Ovary (tissue), 10 donors: ENCODE measurements at regions of chr9 and their contacts with region 1.

Region 1: DNA sequence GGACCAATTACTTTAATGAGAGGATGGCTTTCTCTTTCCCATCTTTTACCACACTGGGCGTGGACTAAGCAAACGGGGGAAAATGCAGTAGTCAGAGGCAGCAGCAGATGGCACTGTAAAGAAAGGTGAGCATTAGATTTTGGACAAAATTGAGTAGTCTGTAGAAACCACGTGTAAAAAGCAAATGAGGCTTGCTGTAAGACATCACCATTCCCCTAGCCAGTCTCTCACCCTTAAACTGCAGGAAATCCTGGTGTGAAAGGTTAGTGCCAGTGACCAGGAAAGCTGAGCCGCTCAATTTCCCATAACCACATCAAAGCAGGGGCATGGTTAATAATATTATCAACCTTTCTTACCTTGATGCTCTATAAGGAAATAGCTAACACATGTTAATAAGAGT is 31.8 kb downstream of the SPATA31C2 start:
- DNase-seq: peak in 2 of 5 donors; percentile 24 to 28
- H3K4me3 ChIP-seq: no peak overlapping the region
- H3K27ac ChIP-seq: no peak overlapping the region
- H3K4me1 ChIP-seq: no peaks in the 10 kb centered on the region
- H3K27me3 ChIP-seq: no peaks in the 10 kb centered on the region
- CTCF ChIP-seq: peak in 1 of 3 donors; percentile 25
- EP300 ChIP-seq: no peak
- POLR2A ChIP-seq: no peak

Region 2: DNA sequence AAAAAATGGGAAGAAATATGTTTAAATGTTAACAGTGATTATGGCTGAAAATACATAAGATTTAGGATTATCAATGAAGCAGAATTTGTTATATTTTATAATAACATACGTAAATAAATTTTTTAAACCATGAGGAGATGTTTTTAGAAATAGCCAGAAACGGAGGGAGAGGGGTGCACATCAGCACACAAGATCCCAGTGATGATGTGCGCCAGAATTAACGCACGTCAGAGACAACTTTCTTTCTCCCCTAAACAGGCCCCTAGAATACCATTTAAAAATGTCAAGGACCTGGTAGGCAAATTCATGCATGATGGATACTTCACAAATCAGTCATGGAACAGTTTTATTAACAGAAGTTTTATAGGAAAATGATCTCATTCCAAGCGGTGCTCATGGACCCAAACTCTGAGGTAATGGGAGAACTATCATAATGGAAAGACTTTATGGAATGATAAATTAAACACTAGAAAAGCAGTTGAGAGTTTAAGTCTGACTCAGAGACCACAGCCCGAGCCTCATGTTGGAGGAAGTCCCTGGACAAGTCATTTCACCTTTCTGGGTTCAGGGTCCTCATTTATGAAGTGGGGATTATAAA is 900.3 kb before region 1 on chr9:
- intact Hi-C with region 1: no loop called
- DNase-seq: no peak
- H3K4me3 ChIP-seq: no peak overlapping the region
- H3K27ac ChIP-seq: no peak overlapping the region
- H3K4me1 ChIP-seq: no peaks in the 10 kb centered on the region
- H3K27me3 ChIP-seq: no peaks in the 10 kb centered on the region
- CTCF ChIP-seq: no peak
- EP300 ChIP-seq: no peak
- POLR2A ChIP-seq: no peak

Region 3: GRCh38 chr9:87973730-87974292 is 132.7 kb before region 1 on chr9:
- intact Hi-C with region 1: no loop called
- DNase-seq: peak in 1 of 5 donors; percentile 47
- H3K4me3 ChIP-seq: peak overlapping the region; percentile 46
- H3K27ac ChIP-seq: peak overlapping the region in 1 of 2 donors; percentile 64
- H3K4me1 ChIP-seq: peaks cover 3% of the 10 kb centered on the region
- H3K27me3 ChIP-seq: no peaks in the 10 kb centered on the region
- CTCF ChIP-seq: no peak
- EP300 ChIP-seq: no peak
- POLR2A ChIP-seq: no peak

Region 4: DNA sequence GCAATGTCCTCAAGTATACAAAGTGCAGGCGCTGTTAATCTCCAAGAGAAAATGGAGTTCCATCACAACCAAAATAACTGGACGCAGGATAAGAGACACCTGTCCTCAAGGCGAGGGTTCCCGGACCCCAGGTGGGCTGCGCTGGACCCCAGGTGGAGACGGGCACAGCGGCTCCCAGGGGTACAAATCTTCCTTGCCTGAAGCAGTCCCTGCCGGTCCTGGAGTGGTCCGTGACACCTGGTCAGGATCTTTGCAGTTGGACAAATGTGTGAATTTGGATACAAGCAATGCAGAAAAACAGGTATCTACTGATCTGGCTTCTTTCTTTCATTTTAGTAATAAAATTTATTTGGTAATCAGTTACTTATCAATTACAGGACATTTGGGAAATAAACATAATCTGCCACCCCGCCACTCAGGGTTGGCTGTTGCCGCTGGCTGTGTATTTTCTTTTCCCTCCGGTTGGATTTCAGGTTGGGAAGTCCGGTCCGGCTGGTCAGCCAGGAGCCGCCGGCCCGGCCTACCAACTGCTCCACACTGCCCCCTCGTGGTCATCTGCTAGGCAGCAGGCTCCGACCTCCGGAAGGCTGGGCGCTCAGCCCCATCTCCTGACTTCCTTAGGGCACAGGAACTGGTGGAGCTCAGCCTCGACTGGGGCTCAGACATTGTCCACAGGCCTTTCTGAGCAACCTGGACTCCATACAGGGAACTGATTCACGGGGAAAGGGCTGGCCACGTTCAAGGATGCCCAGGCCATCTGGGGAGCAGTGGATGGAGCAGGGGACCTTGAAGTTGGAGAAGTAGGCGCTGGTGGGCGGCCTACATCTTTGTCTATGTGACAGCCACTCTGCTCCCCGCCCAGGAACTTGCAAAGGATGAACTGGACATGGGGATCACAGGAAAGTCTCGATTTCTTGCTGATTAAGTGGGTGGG is 471.9 kb after region 1 on chr9:
- intact Hi-C with region 1: loop called in 3 of 4 experiments (anchors 10 kb)
- DNase-seq: peak; percentile 75 to 91 (median 86)
- H3K4me3 ChIP-seq: no peak overlapping the region
- H3K27ac ChIP-seq: no peak overlapping the region
- H3K4me1 ChIP-seq: no peaks in the 10 kb centered on the region
- H3K27me3 ChIP-seq: no peaks in the 10 kb centered on the region
- CTCF ChIP-seq: peak; percentile 81 to 93 (median 88)
- EP300 ChIP-seq: no peak
- POLR2A ChIP-seq: no peak